ENCODE measurements at regions of chr15 and their contacts with region 1.

Region 1: GRCh38 chr15:39543651-39544050 is 37.2 kb upstream of the THBS1 start:
- DNase-seq: peak; percentile 19 to 51
- H3K4me3 ChIP-seq: no peak overlapping the region
- H3K27ac ChIP-seq: no peak overlapping the region
- H3K4me1 ChIP-seq: no peaks in the 10 kb centered on the region
- H3K27me3 ChIP-seq: peaks cover 0 to 1% (median 0%) of the 10 kb centered on the region in 4 experiments; a peak in 1 of 7 replicates
- CTCF ChIP-seq: peak in 2 of 3 experiments; percentile 58 to 64; a peak in 3 of 4 replicates
- EP300 ChIP-seq: no peak
- POLR2A ChIP-seq: no peak
- RAD21 ChIP-seq: peak; percentile 29 to 58; a peak in 3 of 4 replicates

Region 2: GRCh38 chr15:39517122-39517855 is 26.4 kb before region 1 on chr15:
- CTCF ChIA-PET with region 1: no interaction called
- POLR2A ChIA-PET with region 1: no interaction called
- DNase-seq: no peak
- H3K4me3 ChIP-seq: no peak overlapping the region
- H3K27ac ChIP-seq: no peak overlapping the region
- H3K4me1 ChIP-seq: no peaks in the 10 kb centered on the region
- H3K27me3 ChIP-seq: no peaks in the 10 kb centered on the region
- CTCF ChIP-seq: no peak
- EP300 ChIP-seq: no peak
- POLR2A ChIP-seq: no peak
- RAD21 ChIP-seq: no peak

Region 3: DNA sequence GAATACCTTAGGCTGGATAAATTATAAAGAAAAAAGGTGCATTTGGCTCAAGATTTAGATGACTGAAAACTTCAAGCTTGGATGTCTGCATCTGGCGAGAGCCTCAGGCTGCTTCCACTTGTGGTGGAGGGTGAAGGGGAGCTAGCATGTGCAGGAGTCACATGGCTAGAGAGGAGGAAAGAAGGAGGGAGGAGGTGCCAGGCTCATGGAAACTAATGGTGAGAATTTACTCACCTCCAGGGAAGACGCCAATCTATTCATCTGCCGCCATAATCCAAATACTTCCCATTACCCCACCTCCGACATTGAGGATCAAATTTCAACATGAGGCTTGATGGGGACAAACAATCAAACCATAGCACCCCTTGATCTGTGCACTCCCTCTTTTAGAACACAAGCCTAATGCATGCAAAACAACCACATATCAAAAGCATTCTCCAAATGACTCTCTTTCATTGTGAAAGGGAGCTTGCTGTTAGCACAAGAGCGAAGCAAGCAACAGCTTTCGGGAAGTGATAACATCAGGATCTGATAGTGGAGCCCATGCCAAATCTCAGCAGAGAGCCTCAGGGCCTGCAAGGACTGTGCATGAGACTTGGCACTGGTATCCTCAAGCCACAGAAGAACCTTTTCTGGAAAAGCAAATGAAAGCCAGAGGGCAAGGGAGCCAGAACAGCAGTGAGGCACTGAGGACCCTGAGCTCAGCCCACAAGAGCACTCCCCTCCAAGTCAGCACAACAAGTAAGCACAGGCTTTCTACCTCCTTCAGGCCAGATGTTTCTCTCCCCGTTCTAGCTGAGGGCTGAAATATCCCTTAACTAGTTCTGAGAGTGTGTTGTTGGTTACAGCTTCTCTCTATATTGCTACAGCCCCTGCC is 12.9 kb before region 1 on chr15:
- CTCF ChIA-PET with region 1: interaction called, 12 read pairs
- POLR2A ChIA-PET with region 1: no interaction called
- DNase-seq: peak in 1 of 2 experiments; percentile 5
- H3K4me3 ChIP-seq: no peak overlapping the region; a peak in 1 of 8 replicates
- H3K27ac ChIP-seq: no peak overlapping the region
- H3K4me1 ChIP-seq: peaks cover 0 to 7% (median 3%) of the 10 kb centered on the region in 4 experiments; a peak in 4 of 7 replicates
- H3K27me3 ChIP-seq: peaks cover 0 to 2% (median 0%) of the 10 kb centered on the region in 4 experiments; a peak in 1 of 7 replicates
- CTCF ChIP-seq: no peak
- EP300 ChIP-seq: no peak
- POLR2A ChIP-seq: 0 out of 3 replicates have a peak, but pooled peaks of 1 of the 2 experiments have one; percentile 23
- RAD21 ChIP-seq: no peak

Region 4: DNA sequence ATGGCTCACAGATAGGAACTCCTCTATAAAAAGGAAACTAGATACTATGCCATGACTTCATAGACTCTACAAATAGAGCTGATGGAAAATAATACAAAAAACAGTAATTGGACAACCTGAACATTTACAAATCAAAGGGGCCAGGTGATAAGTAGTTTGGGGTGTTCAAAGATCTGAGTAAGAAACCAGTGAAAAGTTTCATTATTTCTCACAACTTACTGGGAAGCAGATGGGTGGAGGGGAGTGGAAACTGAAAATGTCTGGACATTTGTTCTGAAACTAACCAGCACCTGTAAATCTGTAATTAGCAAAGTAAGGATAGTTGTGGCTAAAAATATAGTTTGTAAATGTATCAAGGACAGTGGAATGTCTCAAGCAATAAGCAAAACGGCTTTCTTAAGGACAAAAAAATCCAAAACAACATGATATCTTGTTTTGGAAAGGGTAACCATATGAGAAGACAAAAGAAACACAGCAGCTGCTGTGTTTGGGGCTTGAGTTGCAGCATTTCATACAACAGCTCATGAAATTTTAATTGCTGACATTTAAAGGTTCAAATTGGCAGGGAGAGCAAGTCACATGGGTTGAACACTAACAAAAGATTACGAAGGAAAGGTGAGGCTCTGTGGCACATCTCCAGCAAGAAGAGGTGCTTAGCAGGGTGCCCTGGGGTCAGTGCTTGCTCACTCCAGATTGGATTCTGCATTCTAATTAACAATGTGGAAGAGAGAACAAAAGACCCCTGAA is 10.5 kb after region 1 on chr15:
- CTCF ChIA-PET with region 1: interaction called, 21 read pairs
- POLR2A ChIA-PET with region 1: no interaction called
- DNase-seq: no peak
- H3K4me3 ChIP-seq: no peak overlapping the region
- H3K27ac ChIP-seq: no peak overlapping the region
- H3K4me1 ChIP-seq: peaks cover 0 to 5% (median 0%) of the 10 kb centered on the region in 4 experiments; a peak in 1 of 7 replicates
- H3K27me3 ChIP-seq: no peaks in the 10 kb centered on the region
- CTCF ChIP-seq: no peak
- EP300 ChIP-seq: no peak
- POLR2A ChIP-seq: no peak
- RAD21 ChIP-seq: no peak

Region 5: DNA sequence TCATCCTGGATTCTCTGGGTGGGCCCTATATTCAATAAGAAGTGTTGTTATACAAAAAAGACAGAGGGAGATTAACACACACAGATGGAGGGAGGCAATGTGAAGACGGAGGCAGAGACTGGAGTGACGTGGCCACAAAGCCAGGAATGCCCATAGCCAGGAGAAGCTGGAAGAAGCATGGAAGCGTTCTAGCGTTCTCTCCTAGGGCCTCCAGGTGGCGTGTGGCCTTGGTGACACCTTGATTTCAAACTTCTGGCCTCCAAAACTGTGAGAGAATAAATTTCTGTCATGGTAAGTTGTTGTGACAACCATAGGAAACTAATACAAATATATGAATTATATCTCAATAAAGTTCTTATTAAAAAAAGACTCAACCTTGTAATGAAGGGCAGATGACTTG is 58.5 kb after region 1 on chr15:
- CTCF ChIA-PET with region 1: no interaction called
- POLR2A ChIA-PET with region 1: no interaction called
- DNase-seq: no peak
- H3K4me3 ChIP-seq: no peak overlapping the region
- H3K27ac ChIP-seq: no peak overlapping the region
- H3K4me1 ChIP-seq: no peaks in the 10 kb centered on the region
- H3K27me3 ChIP-seq: no peaks in the 10 kb centered on the region
- CTCF ChIP-seq: peak; percentile 53 to 72 (median 69)
- EP300 ChIP-seq: no peak
- POLR2A ChIP-seq: no peak
- RAD21 ChIP-seq: peak; percentile 71 to 77